ENCODE measurements at regions of chr7 and their contacts with region 1.

Region 1: DNA sequence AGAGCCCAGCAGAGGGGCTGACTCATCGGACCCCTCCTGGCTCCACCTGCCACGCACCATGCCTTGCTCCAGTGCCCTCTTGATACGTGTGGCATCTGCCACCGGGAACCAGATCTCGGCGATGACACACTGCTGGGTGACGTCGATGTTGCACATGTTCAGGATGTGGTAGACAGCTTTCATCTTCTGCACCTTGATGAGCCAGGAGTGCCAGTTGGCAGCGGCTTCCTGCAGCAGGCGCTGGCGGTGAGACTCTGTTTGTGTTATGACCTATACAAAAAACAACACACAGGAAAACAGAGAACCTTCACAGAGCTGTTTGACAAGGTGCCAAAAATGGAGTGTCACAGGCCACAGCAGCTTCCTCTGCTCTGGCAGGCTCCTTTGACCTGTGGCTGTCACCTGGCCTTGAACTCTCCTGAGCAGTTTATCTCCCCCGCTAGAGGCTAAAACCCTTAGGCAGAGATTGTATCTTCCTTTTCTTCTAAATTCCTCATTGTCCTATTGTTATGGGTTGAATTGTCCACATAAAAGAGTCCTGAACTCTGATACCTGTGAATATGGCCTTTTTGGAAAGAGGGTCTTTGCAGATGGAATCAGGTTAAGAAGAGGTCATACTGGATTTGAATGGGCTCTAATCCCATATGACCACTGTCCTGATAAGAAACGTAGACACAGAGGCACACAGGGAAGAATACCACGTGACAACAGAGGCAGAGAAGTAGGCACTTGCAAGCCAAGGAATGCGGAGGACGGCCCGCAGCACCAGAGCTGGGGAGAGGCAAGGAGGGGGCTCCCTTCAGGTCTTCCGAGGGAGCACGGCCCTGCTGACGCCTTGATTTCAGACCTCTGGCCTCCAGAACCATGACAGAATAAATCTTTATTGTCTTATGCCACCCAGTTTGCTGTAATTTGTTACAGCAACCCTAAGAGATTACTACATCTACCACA is 45.0 kb upstream of the TMEM213 start:
- DNase-seq: peak; percentile 98
- H3K4me3 Mint-ChIP-seq: no peak overlapping the region
- H3K27ac Mint-ChIP-seq: peak overlapping the region; percentile 80
- H3K4me1 Mint-ChIP-seq: peaks cover 55% of the 10 kb centered on the region
- H3K27me3 Mint-ChIP-seq: no peaks in the 10 kb centered on the region

Region 2: GRCh38 chr7:138002096-138002827 is 750.6 kb before region 1 on chr7:
- CTCF ChIA-PET with region 1: no interaction called
- intact Hi-C with region 1: loop called (anchors 1 kb)
- DNase-seq: peak; percentile 98
- H3K4me3 Mint-ChIP-seq: peak overlapping the region; percentile 91
- H3K27ac Mint-ChIP-seq: peak overlapping the region; percentile 76
- H3K4me1 Mint-ChIP-seq: peaks cover 25% of the 10 kb centered on the region
- H3K27me3 Mint-ChIP-seq: no peaks in the 10 kb centered on the region

Region 3: DNA sequence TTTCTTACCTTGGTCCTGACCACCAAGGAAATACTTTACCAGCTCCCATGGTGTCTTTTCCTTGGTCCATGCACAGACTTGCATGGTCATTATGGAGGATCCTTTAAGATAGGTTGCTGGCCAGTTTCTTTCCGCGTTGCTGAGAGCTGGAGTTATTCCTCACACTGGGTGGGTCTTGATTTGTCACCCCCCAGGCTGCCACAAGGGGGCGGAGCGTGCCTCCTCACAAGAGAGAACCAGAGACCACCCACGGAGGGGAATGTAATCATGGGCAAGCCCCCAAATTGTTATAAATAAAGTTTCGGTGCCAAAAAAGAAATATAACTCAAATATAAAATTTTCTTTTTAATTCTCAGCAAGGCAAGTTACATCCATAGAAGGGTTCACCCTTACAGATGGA is 303.3 kb before region 1 on chr7:
- CTCF ChIA-PET with region 1: no interaction called
- intact Hi-C with region 1: no loop called
- DNase-seq: peak; percentile 49
- H3K4me3 Mint-ChIP-seq: no peak overlapping the region
- H3K27ac Mint-ChIP-seq: no peak overlapping the region
- H3K4me1 Mint-ChIP-seq: no peaks in the 10 kb centered on the region
- H3K27me3 Mint-ChIP-seq: no peaks in the 10 kb centered on the region

Region 4: DNA sequence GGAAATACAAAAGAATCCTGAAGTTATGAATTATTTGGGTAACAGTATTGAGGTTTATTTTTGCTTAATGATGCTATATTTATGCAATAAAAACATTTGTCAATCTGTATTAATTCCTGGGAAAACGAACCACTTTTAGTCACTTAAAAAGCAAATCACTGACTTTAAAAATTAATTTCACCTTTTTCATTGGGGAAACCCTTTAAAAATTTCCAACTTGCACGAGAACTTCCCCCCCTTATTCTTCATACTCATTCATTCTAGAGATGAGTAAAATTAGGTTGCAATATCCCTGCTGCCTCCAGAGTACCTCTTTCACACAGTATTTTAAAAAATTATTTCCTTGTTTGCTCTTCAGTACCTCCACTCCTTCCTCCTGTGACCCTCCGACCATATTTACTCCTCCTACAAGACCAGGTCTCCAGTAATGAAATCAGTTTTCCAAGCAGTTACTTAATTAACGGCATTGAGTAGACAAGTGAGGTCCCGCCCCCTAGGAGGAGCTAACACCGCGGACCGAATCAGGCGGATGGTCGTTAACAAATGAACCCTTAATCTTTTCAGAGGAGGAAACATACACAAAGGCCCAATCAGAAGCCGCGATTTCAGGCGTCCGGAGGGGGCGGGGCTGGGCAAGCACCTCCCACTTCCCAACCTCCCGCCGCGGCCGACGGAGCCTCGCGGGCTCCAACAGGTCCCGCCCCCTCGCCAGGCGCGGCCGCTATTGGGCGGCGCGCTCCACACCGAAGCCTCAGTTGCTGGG is 293.2 kb before region 1 on chr7:
- CTCF ChIA-PET with region 1: no interaction called
- intact Hi-C with region 1: loop called (anchors 1 kb)
- DNase-seq: peak; percentile 98
- H3K4me3 Mint-ChIP-seq: peak overlapping the region; percentile 94
- H3K27ac Mint-ChIP-seq: peak overlapping the region; percentile 63
- H3K4me1 Mint-ChIP-seq: peaks cover 22% of the 10 kb centered on the region
- H3K27me3 Mint-ChIP-seq: no peaks in the 10 kb centered on the region

Region 5: GRCh38 chr7:138738551-138739335 is 14.1 kb before region 1 on chr7:
- CTCF ChIA-PET with region 1: interaction called, 21 read pairs
- intact Hi-C with region 1: no loop called
- DNase-seq: peak; percentile 94
- H3K4me3 Mint-ChIP-seq: no peak overlapping the region
- H3K27ac Mint-ChIP-seq: no peak overlapping the region
- H3K4me1 Mint-ChIP-seq: peaks cover 6% of the 10 kb centered on the region
- H3K27me3 Mint-ChIP-seq: no peaks in the 10 kb centered on the region

Region 6: GRCh38 chr7:138875794-138876193 is 123.0 kb after region 1 on chr7:
- CTCF ChIA-PET with region 1: no interaction called
- intact Hi-C with region 1: loop called (anchors 1 kb)
- DNase-seq: peak; percentile 81
- H3K4me3 Mint-ChIP-seq: no peak overlapping the region
- H3K27ac Mint-ChIP-seq: no peak overlapping the region
- H3K4me1 Mint-ChIP-seq: peaks cover 13% of the 10 kb centered on the region
- H3K27me3 Mint-ChIP-seq: no peaks in the 10 kb centered on the region

Region 7: DNA sequence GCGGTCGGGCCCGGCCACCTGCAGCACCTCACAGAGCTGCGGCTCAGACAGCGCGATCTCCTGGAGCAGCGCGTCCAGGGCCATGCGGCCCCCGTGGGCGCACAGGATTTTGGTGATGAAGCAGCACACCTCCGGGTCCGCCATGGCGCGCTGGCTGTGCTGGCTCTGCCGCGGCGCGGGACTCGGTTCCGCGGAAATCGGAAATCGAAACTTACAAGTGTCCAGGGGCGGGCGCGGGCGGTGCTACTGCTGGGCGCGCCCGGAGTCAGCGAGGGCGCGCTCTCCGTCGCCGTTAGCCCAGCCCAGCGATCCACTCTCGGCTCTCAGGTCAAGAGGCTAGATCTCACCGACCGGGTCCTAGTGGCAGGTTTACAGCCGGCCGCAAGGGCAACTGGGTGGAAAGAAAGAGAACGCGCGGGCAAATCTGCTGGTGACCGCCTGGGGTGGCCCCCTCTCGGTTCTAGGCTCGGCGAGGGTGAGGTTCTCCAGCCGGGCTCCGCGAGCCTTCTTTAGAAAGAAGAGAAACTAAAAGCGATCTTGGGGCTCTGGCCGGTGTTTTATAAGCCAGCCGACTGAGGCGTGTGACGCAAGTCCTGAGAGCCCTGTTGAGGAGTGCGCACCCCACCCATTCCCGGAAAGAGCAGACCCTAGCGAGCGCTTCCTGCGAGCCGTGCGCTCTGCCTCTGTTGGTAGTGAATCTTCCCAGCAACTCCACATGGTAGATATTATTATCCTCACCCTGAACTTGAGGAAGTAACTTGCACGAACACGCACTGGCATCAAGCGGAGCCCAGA is 356.5 kb after region 1 on chr7 and contains the start of gene ZC3HAV1:
- CTCF ChIA-PET with region 1: no interaction called
- intact Hi-C with region 1: loop called (anchors 10 kb)
- DNase-seq: peak; percentile 90
- H3K4me3 Mint-ChIP-seq: peak within 1 kb of the TSS; percentile 92
- H3K27ac Mint-ChIP-seq: peak within 1 kb of the TSS; percentile 95
- H3K4me1 Mint-ChIP-seq: peaks cover 34% of the 10 kb centered on the region
- H3K27me3 Mint-ChIP-seq: no peaks in the 10 kb centered on the region
- total RNA-seq, gene ZC3HAV1: 131 to 134 TPM

Region 8: DNA sequence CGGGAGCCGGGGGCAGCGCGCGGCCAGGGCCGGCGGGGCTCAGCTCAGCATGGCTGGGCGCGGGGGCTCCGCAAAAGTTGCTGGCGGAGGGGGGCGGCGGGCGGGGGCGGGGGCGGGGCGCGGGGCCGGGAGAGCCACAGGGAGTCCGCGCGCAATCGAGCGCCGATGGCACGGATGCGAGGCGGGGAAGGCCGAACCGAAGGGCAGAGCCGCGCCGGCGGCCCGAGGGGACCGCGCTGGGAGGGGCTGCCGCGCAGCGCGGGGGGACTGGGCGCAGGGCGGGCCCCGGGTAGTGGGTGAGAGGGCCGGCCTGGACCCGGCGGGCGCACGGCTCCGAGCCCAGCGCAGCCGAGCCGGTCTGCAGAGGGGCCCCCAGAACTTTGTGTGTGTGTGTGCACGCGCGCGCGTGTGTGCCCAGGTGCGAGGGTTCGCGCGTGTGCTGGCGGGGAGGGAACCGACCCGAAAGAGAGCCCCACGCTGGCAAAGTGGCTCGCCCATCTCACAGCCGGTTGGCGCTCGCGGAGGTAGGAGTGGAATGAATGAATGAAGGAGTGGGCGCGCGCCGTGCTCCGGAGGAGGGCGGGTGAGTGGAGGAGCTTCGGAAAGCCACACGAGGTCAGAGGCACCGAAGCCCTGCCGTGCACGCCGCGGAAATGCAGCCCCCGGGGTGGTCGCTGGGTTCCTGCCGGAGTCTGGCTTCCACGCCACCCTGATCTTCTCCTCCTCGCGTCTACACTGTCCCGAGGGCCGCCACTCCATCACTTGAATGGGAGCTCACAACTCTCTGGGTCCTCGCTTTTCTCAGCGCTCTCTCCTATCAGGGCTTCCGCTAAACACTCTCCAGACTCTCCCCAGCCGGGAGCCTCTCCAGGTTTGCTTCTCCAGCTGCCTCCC is 1025.4 kb after region 1 on chr7 and contains the start of gene HIPK2:
- CTCF ChIA-PET with region 1: no interaction called
- intact Hi-C with region 1: loop called (anchors 10 kb)
- DNase-seq: peak; percentile 68
- H3K4me3 Mint-ChIP-seq: peak within 1 kb of the TSS; percentile 96
- H3K27ac Mint-ChIP-seq: peak within 1 kb of the TSS; percentile 84
- H3K4me1 Mint-ChIP-seq: peaks cover 36% of the 10 kb centered on the region
- H3K27me3 Mint-ChIP-seq: peaks cover 14% of the 10 kb centered on the region
- total RNA-seq, gene HIPK2: 16.8 to 17.3 TPM